Lower leg skin (tissue), 4 donors: ENCODE measurements at regions of chr19 and their contacts with region 1.

Region 1: DNA sequence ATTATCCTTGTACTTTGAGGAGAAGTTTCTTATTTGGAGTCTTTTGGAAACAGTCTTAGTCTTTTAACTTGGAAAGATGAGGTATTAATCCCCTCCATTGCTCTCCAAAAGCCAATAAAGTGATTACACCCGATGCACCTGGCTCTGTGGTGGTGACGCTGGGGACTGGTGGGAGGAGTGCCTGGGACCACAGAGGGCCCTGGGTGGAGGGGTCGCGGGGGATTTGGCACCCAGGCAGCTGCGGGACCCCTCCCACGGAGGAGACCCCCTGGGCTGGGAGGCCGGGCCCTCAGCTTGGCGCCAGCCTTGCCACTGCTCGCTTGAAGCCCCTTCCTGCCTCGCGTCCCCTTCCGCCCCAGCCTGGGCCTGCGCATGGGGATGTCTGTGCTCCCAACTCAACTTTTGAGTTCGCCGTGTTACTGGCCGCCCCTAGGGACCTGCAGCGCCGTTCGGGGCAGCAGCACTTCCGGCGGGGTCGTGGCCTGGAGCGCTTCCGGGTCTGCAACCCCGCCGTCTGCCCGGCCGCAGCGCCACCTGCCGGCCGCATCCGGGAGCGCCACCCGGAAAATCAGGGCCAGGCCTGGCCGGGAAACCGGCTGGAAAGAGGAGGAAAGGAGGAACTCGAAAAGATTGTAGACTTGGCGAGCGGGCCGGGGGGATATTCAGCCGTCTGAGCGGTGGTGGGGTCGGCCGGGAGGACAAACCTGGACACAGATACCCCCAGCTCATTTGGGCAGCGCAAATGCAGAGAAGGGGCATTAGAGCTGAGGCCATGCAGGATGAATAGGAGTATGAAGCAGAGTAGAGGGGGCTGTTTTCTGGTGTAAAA is 8.4 kb downstream of the PEAK3 start:
- DNase-seq: peak in 1 of 2 donors; percentile 94
- H3K4me3 ChIP-seq: no peak overlapping the region
- CTCF ChIP-seq: peak in 1 of 3 donors; percentile 97
- POLR2A ChIP-seq: no peak

Region 2: GRCh38 chr19:2135474-2136402 is 137.8 kb before region 1 on chr19:
- intact Hi-C with region 1: no loop called
- DNase-seq: no peak
- H3K4me3 ChIP-seq: no peak overlapping the region
- CTCF ChIP-seq: no peak
- POLR2A ChIP-seq: no peak

Region 3: DNA sequence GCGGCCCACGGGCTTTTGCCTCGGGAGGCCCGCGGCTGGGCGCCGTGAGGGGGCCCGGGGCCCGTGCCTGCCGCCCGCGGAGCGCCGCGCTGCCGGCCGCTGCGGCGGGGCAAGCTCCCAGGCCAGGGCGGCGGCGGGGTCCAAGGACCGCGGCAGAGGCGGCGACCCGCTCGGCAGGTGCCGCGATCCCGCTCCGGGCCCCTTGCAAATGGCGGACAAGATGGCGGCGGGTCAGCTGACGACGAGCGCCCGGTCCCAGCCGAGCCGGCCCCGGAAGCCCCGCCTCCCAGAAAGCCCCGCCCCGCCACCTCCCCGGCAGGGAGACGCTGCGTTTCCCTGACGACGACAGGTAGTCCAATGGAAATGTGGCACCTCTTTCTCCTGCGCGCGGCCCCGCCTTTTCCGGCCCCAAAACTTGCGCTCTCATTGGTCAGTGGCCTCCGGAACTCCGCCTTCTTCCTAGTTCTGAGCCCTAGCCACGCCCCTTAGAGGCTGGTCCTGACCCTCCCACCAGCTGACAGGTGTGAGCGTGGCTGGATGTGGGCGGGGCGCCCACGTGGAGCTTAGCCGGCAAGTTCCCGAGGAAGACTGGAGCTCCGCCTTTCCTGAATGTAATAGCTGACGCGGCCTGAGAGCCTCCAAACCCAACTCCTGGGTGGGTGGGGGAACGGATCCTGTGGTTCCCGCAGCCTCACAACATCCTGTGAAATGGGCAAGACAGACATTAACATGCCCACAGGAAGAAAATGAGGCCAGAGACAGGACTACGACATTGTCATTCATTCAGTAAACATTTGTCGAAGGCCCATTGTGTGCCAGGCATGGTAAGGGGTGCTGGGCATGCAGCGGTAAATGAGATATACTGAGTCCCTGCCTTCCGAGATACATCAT is 122.0 kb before region 1 on chr19 and contains the start of gene AP3D1:
- intact Hi-C with region 1: loop called (anchors 10 kb)
- DNase-seq: peak; percentile 100
- H3K4me3 ChIP-seq: peak within 1 kb of the TSS; percentile 93
- CTCF ChIP-seq: no peak
- POLR2A ChIP-seq: no peak
- total RNA-seq, gene AP3D1: 46.5 to 84.7 (median 71.8) TPM

Region 4: GRCh38 chr19:2236314-2237050 is 37.1 kb before region 1 on chr19 and contains the starts of genes PLEKHJ1 and SF3A2:
- intact Hi-C with region 1: loop called (anchors 5 kb)
- DNase-seq: peak; percentile 94 to 99
- H3K4me3 ChIP-seq: peak within 1 kb of the TSS; percentile 75
- CTCF ChIP-seq: peak in 1 of 3 donors; percentile 99
- POLR2A ChIP-seq: no peak
- total RNA-seq, gene PLEKHJ1: 52.2 to 80.5 (median 70.0) TPM
- total RNA-seq, gene SF3A2: 35.6 to 85.6 (median 47.8) TPM

Region 5: DNA sequence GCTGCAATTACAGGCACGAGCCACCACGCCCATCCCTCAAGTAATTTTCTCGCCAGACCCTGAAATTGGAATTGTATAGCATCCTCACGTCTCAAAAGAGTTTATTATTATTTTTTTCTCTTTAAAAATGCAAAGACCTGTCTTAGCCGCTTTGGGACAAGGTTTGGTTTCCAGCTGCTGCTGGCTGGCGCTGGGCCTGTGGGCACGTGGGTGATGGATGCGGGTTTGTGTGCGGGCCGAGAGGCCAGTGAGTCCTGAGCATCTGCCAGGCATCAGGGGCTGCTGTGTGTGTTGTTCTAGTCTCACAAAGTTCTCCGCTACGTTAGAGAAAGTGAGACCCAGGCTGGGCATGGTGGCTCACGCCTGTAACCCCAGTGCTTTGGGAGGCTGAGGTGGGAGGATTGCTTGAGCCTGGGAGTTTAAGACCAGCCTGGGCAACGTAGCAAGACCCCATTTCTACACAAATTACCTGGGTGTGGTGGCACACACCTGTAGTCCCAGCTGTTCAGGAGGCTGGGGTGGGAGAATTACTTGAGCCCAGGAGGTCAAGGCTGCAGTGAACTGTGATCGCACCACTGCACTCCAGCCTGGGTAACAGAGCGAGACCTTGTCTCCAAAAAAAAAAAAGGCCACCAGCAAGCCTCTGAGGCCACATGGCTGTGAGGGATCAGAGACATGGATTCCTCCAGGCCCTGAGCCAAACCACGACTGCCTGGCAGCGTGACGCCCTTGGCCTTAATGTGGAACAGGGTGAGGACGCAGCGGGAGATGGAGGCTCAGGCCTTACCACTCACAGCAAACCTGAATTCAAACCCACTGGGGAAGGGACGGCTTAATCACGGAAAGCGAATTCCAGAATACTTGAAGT is 81.8 kb after region 1 on chr19:
- intact Hi-C with region 1: no loop called
- DNase-seq: no peak
- H3K4me3 ChIP-seq: no peak overlapping the region
- CTCF ChIP-seq: no peak
- POLR2A ChIP-seq: no peak

Region 6: DNA sequence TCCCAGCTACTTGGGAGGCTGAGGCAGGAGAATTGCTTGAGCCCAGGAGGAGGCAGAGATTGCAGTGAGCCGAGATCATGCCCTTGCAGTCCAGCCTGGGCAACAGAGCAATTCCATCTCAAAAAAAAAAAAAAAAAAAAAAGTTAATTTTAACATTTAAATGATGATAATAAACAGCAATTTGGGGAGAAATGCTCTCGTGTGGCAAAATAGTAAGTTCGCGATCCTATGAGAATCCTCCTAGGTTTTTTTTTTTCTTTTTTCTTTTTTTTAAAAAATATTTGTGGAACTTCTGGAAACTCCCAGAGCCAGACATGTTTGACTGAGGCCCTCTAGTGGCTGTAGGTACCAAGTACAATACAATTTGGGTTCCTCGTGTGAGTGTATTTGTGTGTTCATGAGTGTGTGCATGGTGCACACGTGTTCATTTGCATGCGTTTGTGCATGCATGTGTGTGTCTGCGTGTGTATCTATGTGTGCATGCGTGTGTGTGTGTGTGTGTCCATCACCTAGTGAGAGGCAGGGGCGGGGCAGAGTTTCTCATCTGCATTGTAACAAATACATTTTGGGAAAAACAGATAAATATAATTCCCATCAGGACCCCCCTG is 117.7 kb after region 1 on chr19:
- intact Hi-C with region 1: loop called (anchors 10 kb)
- DNase-seq: peak in 1 of 2 donors; percentile 25
- H3K4me3 ChIP-seq: no peak overlapping the region
- CTCF ChIP-seq: peak in 1 of 3 donors; percentile 70
- POLR2A ChIP-seq: no peak